H1 (cell line): ENCODE measurements at regions of chr4 and their contacts with region 1.

Region 1: GRCh38 chr4:8594097-8595038 is 1.8 kb downstream of the CPZ start:
- DNase-seq: peak in 1 of 2 experiments; percentile 77
- H3K4me3 ChIP-seq: peak overlapping the region in 1 of 4 experiments; percentile 78; a peak in 2 of 8 replicates
- H3K27ac ChIP-seq: no peak overlapping the region
- H3K4me1 ChIP-seq: peaks cover 0 to 24% (median 20%) of the 10 kb centered on the region in 4 experiments; a peak in 6 of 7 replicates
- H3K27me3 ChIP-seq: 0 out of 7 replicates have a peak, but pooled peaks cover 0 to 3% (median under 1%) of the 10 kb centered on the region in 4 experiments
- CTCF ChIP-seq: peak in 2 of 3 experiments; percentile 79 to 84; a peak in 3 of 4 replicates
- EP300 ChIP-seq: no peak
- POLR2A ChIP-seq: no peak
- RAD21 ChIP-seq: peak; percentile 90 to 95

Region 2: DNA sequence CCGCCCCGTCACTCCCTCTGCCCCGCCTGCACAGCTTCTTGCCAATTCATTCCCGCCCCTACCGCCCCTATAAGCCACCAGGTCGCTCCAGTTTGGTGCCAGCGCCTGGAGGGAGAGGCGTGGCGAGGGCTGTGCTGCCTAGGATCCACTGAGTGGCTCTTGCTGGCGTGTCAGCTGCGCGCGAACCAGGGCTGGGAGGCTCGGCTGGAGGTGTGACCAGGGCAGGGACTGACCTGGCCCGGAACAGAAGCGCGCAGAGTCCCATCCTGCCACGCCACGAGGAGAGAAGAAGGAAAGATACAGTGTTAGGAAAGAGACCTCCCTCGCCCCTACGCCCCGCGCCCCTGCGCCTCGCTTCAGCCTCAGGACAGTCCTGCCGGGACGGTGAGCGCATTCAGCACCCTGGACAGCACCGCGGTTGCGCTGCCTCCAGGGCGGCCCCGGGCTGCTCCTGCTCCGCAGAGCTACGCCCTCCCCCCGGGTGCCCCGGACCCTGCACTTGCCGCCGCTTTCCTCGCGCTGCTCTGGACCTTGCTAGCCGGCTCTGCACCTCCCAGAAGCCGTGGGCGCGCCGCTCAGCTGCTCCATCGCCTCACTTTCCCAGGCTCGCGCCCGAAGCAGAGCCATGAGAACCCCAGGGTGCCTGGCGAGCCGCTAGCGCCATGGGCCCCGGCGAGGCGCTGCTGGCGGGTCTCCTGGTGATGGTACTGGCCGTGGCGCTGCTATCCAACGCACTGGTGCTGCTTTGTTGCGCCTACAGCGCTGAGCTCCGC is 13.9 kb before region 1 on chr4 and contains the start of gene GPR78:
- CTCF ChIA-PET with region 1: interaction called, 14 read pairs
- POLR2A ChIA-PET with region 1: interaction called, 8 read pairs
- DNase-seq: peak; percentile 73 to 99
- H3K4me3 ChIP-seq: peak within 1 kb of the TSS in 3 of 4 experiments; percentile 29 to 56 (median 40); a peak in 7 of 8 replicates
- H3K27ac ChIP-seq: no peak within 1 kb of the TSS
- H3K4me1 ChIP-seq: peaks cover 0 to 24% (median 18%) of the 10 kb centered on the region in 4 experiments; a peak in 6 of 7 replicates
- H3K27me3 ChIP-seq: peaks cover 3 to 16% (median 15%) of the 10 kb centered on the region in 4 experiments
- CTCF ChIP-seq: no peak
- EP300 ChIP-seq: no peak
- POLR2A ChIP-seq: 0 out of 3 replicates have a peak, but pooled peaks of 1 of the 2 experiments have one; percentile 34
- RAD21 ChIP-seq: no peak
- total RNA-seq, gene GPR78: 3.0 and 3.3 TPM in 2 replicates

Region 3: GRCh38 chr4:8607603-8608481 is 13.5 kb after region 1 on chr4:
- CTCF ChIA-PET with region 1: interaction called, 26 read pairs
- POLR2A ChIA-PET with region 1: interaction called, 12 read pairs
- DNase-seq: peak; percentile 21 to 99
- H3K4me3 ChIP-seq: no peak overlapping the region
- H3K27ac ChIP-seq: no peak overlapping the region
- H3K4me1 ChIP-seq: peaks cover 0 to 2% (median 0%) of the 10 kb centered on the region in 4 experiments; a peak in 1 of 7 replicates
- H3K27me3 ChIP-seq: no peaks in the 10 kb centered on the region; a peak in 1 of 7 replicates
- CTCF ChIP-seq: peak in 2 of 3 experiments; percentile 95 to 96; a peak in 3 of 4 replicates
- EP300 ChIP-seq: no peak
- POLR2A ChIP-seq: no peak
- RAD21 ChIP-seq: peak; percentile 79 to 85